MCF 10A (cell line): ENCODE measurements at regions of chr16 and their contacts with region 1.

Region 1: GRCh38 chr16:58336332-58337089 is 41.7 kb upstream of the PRSS54 start:
- DNase-seq: peak; percentile 77
- H3K4me3 Mint-ChIP-seq: peak overlapping the region; percentile 35
- H3K27ac Mint-ChIP-seq: no peak overlapping the region
- H3K4me1 Mint-ChIP-seq: no peaks in the 10 kb centered on the region
- H3K27me3 Mint-ChIP-seq: no peaks in the 10 kb centered on the region
- CTCF ChIP-seq: peak; percentile 86

Region 2: GRCh38 chr16:58454856-58455255 is 118.3 kb after region 1 on chr16:
- CTCF ChIA-PET with region 1: interaction called, 12 read pairs
- POLR2A ChIA-PET with region 1: interaction called, 3 read pairs
- intact Hi-C with region 1: no loop called
- DNase-seq: no peak
- H3K4me3 Mint-ChIP-seq: no peak overlapping the region
- H3K27ac Mint-ChIP-seq: no peak overlapping the region
- H3K4me1 Mint-ChIP-seq: peaks cover 16% of the 10 kb centered on the region
- H3K27me3 Mint-ChIP-seq: peaks cover 23% of the 10 kb centered on the region
- CTCF ChIP-seq: no peak

Region 3: DNA sequence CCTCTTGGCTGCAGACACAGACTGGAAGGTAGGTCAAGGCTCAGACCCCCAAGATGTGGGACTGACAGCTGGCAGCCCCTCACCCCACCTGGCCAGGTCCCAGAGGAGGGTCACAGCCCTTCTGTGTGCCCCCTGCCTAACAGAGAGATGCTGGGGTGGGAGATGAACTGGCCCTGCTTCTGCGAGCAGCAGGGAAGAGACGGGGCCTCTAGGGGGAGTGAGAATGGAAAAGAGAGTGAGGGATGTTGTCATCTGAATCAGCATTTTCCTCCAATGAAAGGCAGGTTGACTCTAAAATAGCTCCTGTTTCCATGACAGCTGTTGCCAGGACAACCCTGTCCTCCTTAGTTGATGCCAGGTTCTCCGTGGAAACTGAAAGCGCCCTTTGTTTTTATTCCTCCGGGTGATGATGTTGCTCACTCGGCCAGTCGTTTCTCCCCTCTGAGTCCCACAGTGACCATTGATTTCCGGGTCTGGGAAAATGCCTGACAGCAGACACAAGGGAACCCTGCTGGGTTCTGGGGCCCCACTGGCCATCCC is 158.5 kb after region 1 on chr16:
- CTCF ChIA-PET with region 1: interaction called, 72 read pairs
- POLR2A ChIA-PET with region 1: interaction called, 3 read pairs
- intact Hi-C with region 1: no loop called
- DNase-seq: peak; percentile 86
- H3K4me3 Mint-ChIP-seq: no peak overlapping the region
- H3K27ac Mint-ChIP-seq: no peak overlapping the region
- H3K4me1 Mint-ChIP-seq: no peaks in the 10 kb centered on the region
- H3K27me3 Mint-ChIP-seq: no peaks in the 10 kb centered on the region
- CTCF ChIP-seq: peak; percentile 42

Region 4: DNA sequence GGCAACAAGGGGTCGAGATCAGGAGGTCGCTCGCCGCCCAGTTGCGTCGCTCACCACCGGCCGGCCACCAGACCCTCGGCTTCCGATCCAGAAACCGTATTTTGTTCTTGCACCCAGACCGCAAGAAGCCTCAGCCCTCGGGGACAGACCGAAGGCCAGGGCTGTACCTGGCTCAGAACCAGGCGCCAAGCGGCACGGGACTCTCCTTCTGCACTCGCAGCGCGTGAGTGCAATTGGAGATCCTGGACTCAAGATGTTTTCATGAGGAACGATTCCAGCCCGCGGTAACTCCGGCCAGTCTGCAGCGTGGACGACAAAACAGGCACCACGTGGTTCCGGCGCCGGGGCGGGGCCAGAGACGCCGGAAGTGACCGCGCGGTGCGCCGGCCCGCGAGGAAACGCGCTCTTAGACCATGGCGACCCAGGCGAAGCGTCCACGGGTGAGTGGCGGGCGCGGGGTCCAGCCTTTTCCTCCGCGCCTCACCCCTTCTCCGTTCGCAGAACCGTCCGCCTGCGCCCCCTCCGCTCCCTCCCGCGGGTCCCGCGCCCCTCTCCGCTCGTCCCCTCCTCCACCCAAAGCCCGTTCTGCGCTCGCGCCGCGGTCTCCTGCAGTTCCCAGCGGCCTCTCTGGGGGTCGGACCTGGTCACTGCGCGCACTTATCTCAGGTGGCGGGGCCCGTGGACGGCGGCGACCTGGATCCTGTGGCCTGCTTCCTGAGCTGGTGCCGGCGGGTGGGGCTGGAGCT is 178.8 kb after region 1 on chr16 and contains the start of gene SETD6:
- CTCF ChIA-PET with region 1: interaction called, 21 read pairs
- POLR2A ChIA-PET with region 1: interaction called, 3 read pairs
- intact Hi-C with region 1: no loop called
- DNase-seq: peak; percentile 88
- H3K4me3 Mint-ChIP-seq: peak within 1 kb of the TSS; percentile 93
- H3K27ac Mint-ChIP-seq: peak within 1 kb of the TSS; percentile 92
- H3K4me1 Mint-ChIP-seq: peaks cover 6% of the 10 kb centered on the region
- H3K27me3 Mint-ChIP-seq: no peaks in the 10 kb centered on the region
- CTCF ChIP-seq: peak; percentile 18
- total RNA-seq, gene SETD6: 18.4 and 19.5 TPM in 2 replicates

Region 5: GRCh38 chr16:58582971-58583765 is 246.7 kb after region 1 on chr16:
- CTCF ChIA-PET with region 1: no interaction called
- POLR2A ChIA-PET with region 1: no interaction called
- intact Hi-C with region 1: no loop called
- DNase-seq: no peak
- H3K4me3 Mint-ChIP-seq: no peak overlapping the region
- H3K27ac Mint-ChIP-seq: no peak overlapping the region
- H3K4me1 Mint-ChIP-seq: no peaks in the 10 kb centered on the region
- H3K27me3 Mint-ChIP-seq: no peaks in the 10 kb centered on the region
- CTCF ChIP-seq: no peak

Region 6: DNA sequence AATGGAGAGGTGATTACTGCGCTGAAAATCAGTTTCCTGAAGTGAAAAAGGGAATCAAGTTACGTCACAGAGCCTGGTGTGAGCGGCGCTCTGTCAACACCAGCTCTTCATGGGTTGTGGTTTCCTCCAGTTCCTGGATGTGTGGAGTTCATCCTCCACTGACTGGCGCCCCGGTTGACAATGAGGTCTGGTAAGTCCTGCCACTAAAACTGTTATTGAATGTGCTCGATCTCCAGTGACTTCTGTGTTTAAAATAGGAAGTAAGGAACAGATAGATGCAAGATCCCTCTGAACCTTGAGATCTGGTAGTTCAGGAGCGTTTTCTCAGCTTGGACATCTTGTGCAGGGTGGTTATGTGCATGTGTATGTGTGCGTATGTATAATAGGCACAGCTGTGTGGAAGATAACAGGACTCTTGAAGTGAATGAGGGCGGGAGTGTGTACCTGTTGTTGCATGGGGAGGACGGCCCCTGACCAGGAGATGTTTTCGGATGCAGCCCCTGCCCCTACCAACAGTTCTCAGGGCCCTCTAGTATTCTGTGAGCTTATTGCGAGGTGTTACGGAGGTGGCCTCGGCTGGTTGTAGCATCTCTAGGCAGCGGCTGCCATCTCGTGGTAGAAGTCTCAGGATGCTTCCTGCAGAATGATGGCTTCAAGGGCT is 419.6 kb after region 1 on chr16:
- CTCF ChIA-PET with region 1: interaction called, 6 read pairs
- POLR2A ChIA-PET with region 1: no interaction called
- intact Hi-C with region 1: loop called (anchors 5 kb)
- DNase-seq: peak; percentile 68
- H3K4me3 Mint-ChIP-seq: no peak overlapping the region
- H3K27ac Mint-ChIP-seq: no peak overlapping the region
- H3K4me1 Mint-ChIP-seq: no peaks in the 10 kb centered on the region
- H3K27me3 Mint-ChIP-seq: no peaks in the 10 kb centered on the region
- CTCF ChIP-seq: peak; percentile 54